ENCODE measurements at regions of chrX and their contacts with region 1.

Region 1: DNA sequence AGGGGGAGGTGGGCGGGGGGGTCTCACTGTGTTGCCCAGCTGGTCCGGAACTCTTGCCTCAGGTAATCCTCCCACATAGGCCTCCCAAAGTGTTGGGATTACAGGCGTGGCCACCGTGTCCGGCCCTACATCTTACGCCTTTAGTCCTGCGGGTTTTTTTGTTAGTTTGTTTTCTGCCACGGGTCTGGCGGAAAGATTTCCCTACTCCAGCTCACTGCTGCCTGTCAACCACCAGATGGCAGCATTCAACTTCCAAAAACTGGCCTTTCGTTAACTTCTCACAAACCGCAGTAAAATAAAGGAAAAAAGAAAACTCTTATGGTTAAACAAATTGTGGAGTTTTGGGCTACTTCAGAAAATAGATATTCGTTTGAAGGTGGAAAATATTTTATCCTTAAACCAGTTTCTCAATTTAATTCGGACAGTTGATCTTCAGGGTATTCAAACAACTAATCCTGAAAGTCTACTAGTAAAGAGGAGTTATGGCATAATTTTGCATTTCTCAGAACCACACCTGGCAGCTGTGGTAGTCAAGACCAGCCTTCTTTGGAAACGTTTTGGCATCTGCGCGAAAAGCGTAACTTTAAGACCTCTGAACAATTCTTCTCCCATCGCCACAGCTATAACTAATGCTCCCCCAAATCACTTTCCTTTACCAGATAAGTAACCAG is 41.1 kb downstream of the LUZP4 start:
- DNase-seq: no peak
- H3K4me3 Mint-ChIP-seq: no peak overlapping the region
- H3K27ac Mint-ChIP-seq: no peak overlapping the region
- H3K4me1 Mint-ChIP-seq: no peaks in the 10 kb centered on the region
- H3K27me3 Mint-ChIP-seq: no peaks in the 10 kb centered on the region

Region 2: DNA sequence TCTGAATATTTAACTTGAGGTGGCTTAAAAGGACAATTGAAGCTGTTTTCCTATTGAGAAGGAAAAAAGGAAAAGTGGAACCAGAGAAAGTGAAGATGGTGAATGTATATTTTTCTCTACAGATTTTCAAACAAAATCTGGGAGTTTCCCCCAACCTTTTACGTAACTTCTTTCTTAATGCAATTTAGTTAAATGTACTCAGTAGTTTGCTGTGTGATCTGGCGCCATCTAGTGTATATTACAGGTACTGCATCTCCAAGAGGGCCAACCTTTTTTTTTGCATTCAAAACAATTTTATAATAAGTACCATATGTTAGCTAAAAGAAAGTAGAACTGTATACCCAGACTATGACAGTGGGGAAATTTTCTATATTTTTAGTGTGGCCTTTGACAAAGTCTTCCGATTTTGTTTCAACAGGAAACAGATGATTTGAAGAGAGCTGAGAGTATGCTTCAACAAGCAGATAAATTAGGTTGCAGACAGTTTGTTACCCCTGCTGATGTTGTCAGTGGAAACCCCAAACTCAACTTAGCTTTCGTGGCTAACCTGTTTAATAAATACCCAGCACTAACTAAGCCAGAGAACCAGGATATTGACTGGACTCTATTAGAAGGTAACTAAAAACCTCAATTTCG is 312.4 kb after region 1 on chrX:
- intact Hi-C with region 1: loop called (anchors 1 kb)
- DNase-seq: no peak
- H3K4me3 Mint-ChIP-seq: no peak overlapping the region
- H3K27ac Mint-ChIP-seq: no peak overlapping the region
- H3K4me1 Mint-ChIP-seq: no peaks in the 10 kb centered on the region
- H3K27me3 Mint-ChIP-seq: no peaks in the 10 kb centered on the region

Measured in activated T-helper 2 cell treated with anti-CD3 and anti-CD28 coated beads, Interferon-gamma antibody, Interleukin-2, Interleukin-4, amounts not matched to agents 10 μg/mL and 5 μg/mL and 100 μg/mL, durations not matched to agents 14 hours and 24 hours and 36 hours (primary cell).